Endothelial cell of umbilical vein (primary cell): ENCODE measurements at regions of chr2 and their contacts with region 1.

Region 1: GRCh38 chr2:219543601-219544358 is at the starts of genes CHPF and TMEM198:
- DNase-seq: peak; percentile 86
- H3K4me3 ChIP-seq: peak within 1 kb of the TSS; percentile 29 to 37 (median 29)
- H3K27ac ChIP-seq: no peak within 1 kb of the TSS
- H3K4me1 ChIP-seq: peaks cover 7% of the 10 kb centered on the region
- H3K27me3 ChIP-seq: peaks cover 18 to 23% of the 10 kb centered on the region in 2 experiments
- CTCF ChIP-seq: no peak
- POLR2A ChIP-seq: no peak
- total RNA-seq, gene CHPF: 0.24 and 0.30 TPM in 2 replicates
- total RNA-seq, gene TMEM198: not detected in 2 replicates

Region 2: DNA sequence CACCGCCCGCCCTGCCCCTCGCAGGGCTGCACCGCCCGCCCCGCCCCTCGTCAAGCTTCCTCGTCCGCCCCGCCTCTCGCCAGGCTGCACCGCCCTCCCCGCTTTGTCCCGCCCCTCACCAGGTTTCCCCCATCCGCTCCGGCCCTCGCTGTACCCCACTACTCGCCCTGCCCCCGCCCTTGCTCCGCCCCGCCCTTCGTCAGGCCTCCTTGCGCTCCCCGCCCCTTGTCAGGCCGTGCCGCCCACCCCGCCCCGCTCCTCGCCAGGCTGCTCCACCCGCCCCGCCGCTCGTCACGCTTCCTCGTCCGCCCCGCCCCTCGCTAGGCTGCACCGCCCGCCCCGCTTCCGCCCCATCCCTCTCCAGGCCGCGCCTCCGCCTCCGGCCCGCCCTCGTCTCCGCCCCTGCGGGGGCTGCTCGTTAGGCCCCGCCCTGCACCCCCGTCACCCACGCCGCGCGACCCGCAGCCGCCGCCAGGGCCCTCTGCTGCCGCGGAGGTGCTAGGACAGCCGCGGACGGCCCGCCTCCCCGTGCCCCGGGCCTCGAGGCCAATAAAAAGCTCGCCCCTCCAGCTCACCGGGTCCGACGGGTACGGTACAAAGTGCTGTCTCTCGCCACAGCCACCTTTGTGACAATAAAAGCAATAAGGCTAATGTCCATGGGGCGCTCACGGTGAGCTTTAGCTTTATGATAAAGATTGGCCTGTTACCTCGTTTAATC is 155.5 kb before region 1 on chr2:
- CTCF ChIA-PET with region 1: no interaction called
- POLR2A ChIA-PET with region 1: no interaction called
- dilution Hi-C with region 1: no loop called
- intact Hi-C with region 1: loop called (anchors 1 kb)
- DNase-seq: peak; percentile 96
- H3K4me3 ChIP-seq: peak overlapping the region in 2 of 3 experiments; percentile 46 to 55
- H3K27ac ChIP-seq: no peak overlapping the region
- H3K4me1 ChIP-seq: peaks cover 9% of the 10 kb centered on the region
- H3K27me3 ChIP-seq: peaks cover 2% of the 10 kb centered on the region in 2 experiments
- CTCF ChIP-seq: peak; percentile 47 to 56
- POLR2A ChIP-seq: no peak

Region 3: GRCh38 chr2:219560037-219560892 is 16.5 kb after region 1 on chr2:
- CTCF ChIA-PET with region 1: interaction called, 14 read pairs
- POLR2A ChIA-PET with region 1: no interaction called
- dilution Hi-C with region 1: no loop called
- intact Hi-C with region 1: no loop called
- DNase-seq: no peak
- H3K4me3 ChIP-seq: no peak overlapping the region
- H3K27ac ChIP-seq: no peak overlapping the region
- H3K4me1 ChIP-seq: no peaks in the 10 kb centered on the region
- H3K27me3 ChIP-seq: peaks cover 0 to 3% of the 10 kb centered on the region in 2 experiments
- CTCF ChIP-seq: peak; percentile 37 to 70
- POLR2A ChIP-seq: no peak

Region 4: DNA sequence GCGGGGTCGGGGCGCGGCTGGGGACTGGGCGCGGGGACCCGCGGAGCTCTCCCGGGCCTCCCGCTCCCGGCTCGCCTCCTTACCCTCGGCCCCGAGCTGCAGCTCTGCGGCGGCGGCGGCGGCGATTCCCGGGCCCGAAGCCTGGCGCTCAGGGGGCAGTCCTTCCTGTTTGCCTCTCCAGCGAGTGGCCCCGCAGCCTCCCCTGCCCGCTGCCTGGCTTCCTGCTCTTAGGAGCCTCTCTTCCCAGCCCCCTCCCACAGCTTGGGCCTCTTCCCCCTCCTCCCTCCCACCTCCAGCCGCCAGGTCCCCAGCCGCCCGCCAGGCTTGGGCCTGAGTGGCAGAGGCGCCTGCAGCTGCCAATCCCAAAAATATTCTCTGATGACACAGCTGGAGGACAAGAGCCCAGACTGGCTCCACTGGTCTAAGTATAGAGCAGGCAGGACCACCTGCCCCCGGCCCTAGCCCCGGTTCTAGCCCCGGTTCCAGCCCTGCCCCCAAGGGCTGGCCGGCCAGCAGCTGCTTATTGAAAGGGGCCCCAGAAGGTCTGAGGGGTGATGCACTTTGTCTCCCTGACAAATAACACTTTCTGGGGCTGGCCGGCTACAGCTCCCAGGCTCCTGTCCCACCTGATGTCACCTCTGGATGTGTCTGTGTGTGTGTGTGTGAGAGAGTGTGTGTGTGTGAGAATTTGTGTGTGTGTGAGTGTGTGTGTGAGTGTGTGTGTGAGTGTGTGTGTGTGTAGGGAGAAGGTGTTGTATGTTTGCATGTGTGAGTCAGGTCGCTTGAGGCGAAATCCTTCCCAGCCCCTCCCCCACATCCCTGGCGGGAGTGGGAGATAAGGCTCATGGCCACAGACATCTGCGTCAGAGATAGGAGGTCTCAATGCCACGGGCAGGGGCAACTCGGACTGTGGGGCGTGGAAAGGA is 27.8 kb after region 1 on chr2 and contains the start of gene OBSL1:
- CTCF ChIA-PET with region 1: interaction called, 10 read pairs
- POLR2A ChIA-PET with region 1: no interaction called
- dilution Hi-C with region 1: no loop called
- intact Hi-C with region 1: no loop called
- DNase-seq: peak; percentile 61
- H3K4me3 ChIP-seq: peak within 1 kb of the TSS in 2 of 3 experiments; percentile 36 to 75
- H3K27ac ChIP-seq: no peak within 1 kb of the TSS
- H3K4me1 ChIP-seq: no peaks in the 10 kb centered on the region
- H3K27me3 ChIP-seq: peaks cover 14 to 25% of the 10 kb centered on the region in 2 experiments
- CTCF ChIP-seq: no peak
- POLR2A ChIP-seq: no peak
- total RNA-seq, gene OBSL1: 8.0 and 16.7 TPM in 2 replicates

Region 5: DNA sequence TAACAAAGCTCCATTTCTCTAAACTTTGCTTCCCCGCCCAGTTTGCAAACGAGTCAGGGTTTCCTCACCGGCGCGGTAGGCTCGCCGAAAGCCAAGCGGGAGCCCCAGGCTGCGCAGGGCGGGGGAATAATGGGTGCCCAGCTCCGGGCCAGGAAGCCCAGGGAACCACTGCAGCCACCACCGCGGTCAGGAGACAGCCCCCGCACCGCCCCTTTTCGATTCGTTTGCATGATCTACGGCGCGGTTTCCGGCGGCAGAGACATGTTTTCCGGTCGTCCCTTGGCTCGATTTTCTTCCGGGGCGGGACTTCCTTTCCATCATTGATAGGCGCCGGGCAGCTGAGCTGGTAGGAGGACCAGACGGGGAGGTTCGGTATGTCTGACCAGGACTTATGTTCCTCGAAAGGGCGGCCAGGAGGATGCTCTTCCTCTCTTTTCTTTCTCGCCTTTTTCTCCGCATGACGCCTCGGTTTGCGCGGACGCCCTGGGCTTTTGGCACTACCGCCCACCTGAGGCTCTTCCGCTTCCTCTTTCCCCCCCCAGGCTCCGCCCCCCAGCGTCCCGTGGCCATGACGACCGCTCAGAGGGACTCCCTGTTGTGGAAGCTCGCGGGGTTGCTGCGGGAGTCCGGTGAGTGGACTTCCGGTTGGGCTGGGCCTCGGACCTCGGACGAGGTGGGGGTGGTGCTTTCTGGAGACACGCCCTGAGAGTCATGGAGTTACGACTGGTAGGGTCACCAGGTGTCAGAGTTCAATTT is 54.0 kb after region 1 on chr2 and contains the start of gene STK11IP:
- CTCF ChIA-PET with region 1: interaction called, 4 read pairs
- POLR2A ChIA-PET with region 1: no interaction called
- dilution Hi-C with region 1: no loop called
- intact Hi-C with region 1: loop called (anchors 1 kb)
- DNase-seq: peak; percentile 95
- H3K4me3 ChIP-seq: peak within 1 kb of the TSS; percentile 47 to 76 (median 67)
- H3K27ac ChIP-seq: peak within 1 kb of the TSS; percentile 86
- H3K4me1 ChIP-seq: peaks cover 12% of the 10 kb centered on the region
- H3K27me3 ChIP-seq: no peaks in the 10 kb centered on the region
- CTCF ChIP-seq: no peak
- POLR2A ChIP-seq: peak; percentile 97
- total RNA-seq, gene STK11IP: 19.2 and 20.2 TPM in 2 replicates

Region 6: DNA sequence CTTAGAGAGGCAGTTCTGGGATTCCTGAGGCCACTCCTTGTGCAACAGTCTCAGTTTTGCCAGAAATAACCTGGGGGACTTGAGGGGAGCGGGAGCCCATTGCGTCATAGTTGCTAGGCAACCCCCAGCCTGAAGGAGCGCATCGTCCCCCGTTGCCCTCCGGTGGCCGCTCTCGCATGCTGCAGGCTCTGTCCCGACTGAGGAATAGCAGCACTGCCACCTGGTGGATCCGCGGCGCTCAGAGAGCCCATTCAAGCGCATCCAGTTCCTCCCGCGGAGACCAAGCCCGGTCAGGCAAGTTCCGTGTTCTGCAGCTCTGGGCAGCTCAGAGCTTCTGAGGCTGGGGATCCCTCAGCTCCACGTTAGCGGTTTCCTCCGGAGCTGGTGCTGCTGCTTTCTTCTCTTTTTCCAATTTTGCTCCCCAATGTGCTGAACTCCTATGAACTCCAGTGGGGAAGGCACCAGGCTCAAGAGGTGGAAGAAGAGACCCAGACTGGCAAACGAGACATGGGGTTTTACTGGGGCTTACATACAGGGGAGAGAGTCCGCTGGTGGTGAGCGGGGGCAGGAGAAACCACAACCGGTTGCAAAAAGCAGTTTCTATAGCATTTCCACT is 98.8 kb after region 1 on chr2:
- CTCF ChIA-PET with region 1: interaction called, 47 read pairs
- POLR2A ChIA-PET with region 1: no interaction called
- dilution Hi-C with region 1: no loop called
- intact Hi-C with region 1: loop called (anchors 1 kb)
- DNase-seq: peak; percentile 92
- H3K4me3 ChIP-seq: no peak overlapping the region
- H3K27ac ChIP-seq: no peak overlapping the region
- H3K4me1 ChIP-seq: no peaks in the 10 kb centered on the region
- H3K27me3 ChIP-seq: peaks cover 0 to 3% of the 10 kb centered on the region in 2 experiments
- CTCF ChIP-seq: peak; percentile 99 to 100
- POLR2A ChIP-seq: no peak

Region 7: GRCh38 chr2:219689676-219690628 is 146.2 kb after region 1 on chr2:
- CTCF ChIA-PET with region 1: interaction called, 31 read pairs
- POLR2A ChIA-PET with region 1: no interaction called
- dilution Hi-C with region 1: no loop called
- intact Hi-C with region 1: loop called (anchors 1 kb)
- DNase-seq: peak; percentile 62
- H3K4me3 ChIP-seq: no peak overlapping the region
- H3K27ac ChIP-seq: no peak overlapping the region
- H3K4me1 ChIP-seq: no peaks in the 10 kb centered on the region
- H3K27me3 ChIP-seq: peaks cover 0 to 2% of the 10 kb centered on the region in 2 experiments
- CTCF ChIP-seq: peak; percentile 43 to 68
- POLR2A ChIP-seq: no peak

Region 8: GRCh38 chr2:219886615-219887014 is 342.8 kb after region 1 on chr2:
- CTCF ChIA-PET with region 1: no interaction called
- POLR2A ChIA-PET with region 1: no interaction called
- dilution Hi-C with region 1: no loop called
- intact Hi-C with region 1: no loop called
- DNase-seq: no peak
- H3K4me3 ChIP-seq: no peak overlapping the region
- H3K27ac ChIP-seq: no peak overlapping the region
- H3K4me1 ChIP-seq: no peaks in the 10 kb centered on the region
- H3K27me3 ChIP-seq: no peaks in the 10 kb centered on the region
- CTCF ChIP-seq: no peak
- POLR2A ChIP-seq: no peak